CD4-positive, alpha-beta memory T cell (primary cell): ENCODE measurements at regions of chr3 and their contacts with region 1.

Region 1: GRCh38 chr3:38227989-38228388 is 37.6 kb upstream of the SLC22A13 start:
- DNase-seq: no peak
- H3K4me3 ChIP-seq: no peak overlapping the region
- H3K4me3 Mint-ChIP-seq: no peak overlapping the region
- H3K27ac ChIP-seq: no peak overlapping the region
- H3K27ac Mint-ChIP-seq: no peak overlapping the region
- H3K4me1 ChIP-seq: no peaks in the 10 kb centered on the region
- H3K4me1 Mint-ChIP-seq: no peaks in the 10 kb centered on the region
- H3K27me3 ChIP-seq: no peaks in the 10 kb centered on the region
- H3K27me3 Mint-ChIP-seq: no peaks in the 10 kb centered on the region

Region 2: DNA sequence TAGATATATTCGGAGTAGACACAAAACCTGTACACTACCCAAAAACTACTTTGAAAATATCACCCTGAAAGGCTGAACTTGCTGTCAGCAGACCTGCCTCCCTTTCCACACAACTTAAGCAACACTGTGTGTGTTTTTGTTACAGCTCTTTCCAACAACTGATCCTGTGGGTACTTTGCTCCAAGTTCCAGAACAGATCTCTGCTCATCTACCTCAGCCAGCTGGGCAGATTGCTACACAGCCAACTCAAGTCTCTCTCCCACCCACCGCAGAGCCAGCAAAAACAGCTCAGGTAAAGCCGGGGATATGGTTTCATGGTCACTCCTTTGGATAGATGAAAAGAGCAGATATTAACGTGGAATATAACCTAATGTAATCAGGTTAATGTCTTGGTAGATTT is 17.9 kb after region 1 on chr3:
- CTCF ChIA-PET with region 1: no interaction called
- POLR2A ChIA-PET with region 1: no interaction called
- intact Hi-C with region 1: loop called (anchors 2 kb)
- DNase-seq: no peak
- H3K4me3 ChIP-seq: no peak overlapping the region
- H3K4me3 Mint-ChIP-seq: no peak overlapping the region
- H3K27ac ChIP-seq: no peak overlapping the region
- H3K27ac Mint-ChIP-seq: peak overlapping the region in 1 of 7 donors; percentile 25
- H3K4me1 ChIP-seq: no peaks in the 10 kb centered on the region
- H3K4me1 Mint-ChIP-seq: peaks cover 0 to 4% (median 0%) of the 10 kb centered on the region in 4 donors
- H3K27me3 ChIP-seq: no peaks in the 10 kb centered on the region
- H3K27me3 Mint-ChIP-seq: no peaks in the 10 kb centered on the region

Region 3: GRCh38 chr3:38717355-38718240 is 489.6 kb after region 1 on chr3:
- CTCF ChIA-PET with region 1: no interaction called
- POLR2A ChIA-PET with region 1: no interaction called
- intact Hi-C with region 1: no loop called
- DNase-seq: no peak
- H3K4me3 ChIP-seq: no peak overlapping the region
- H3K4me3 Mint-ChIP-seq: no peak overlapping the region
- H3K27ac ChIP-seq: no peak overlapping the region
- H3K27ac Mint-ChIP-seq: no peak overlapping the region
- H3K4me1 ChIP-seq: no peaks in the 10 kb centered on the region
- H3K4me1 Mint-ChIP-seq: peaks cover 0 to 4% (median under 1%) of the 10 kb centered on the region in 4 donors
- H3K27me3 ChIP-seq: no peaks in the 10 kb centered on the region
- H3K27me3 Mint-ChIP-seq: peaks cover 5 to 6% of the 10 kb centered on the region in 2 donors